Activated CD8-positive, alpha-beta memory T cell treated with anti-CD3 and anti-CD28 coated beads, Interleukin-2, amount 10 ng/mL, durations not matched to agents 7 days and 5 days (primary cell): ENCODE measurements at regions of chr3 and their contacts with region 1.

Region 1: GRCh38 chr3:113287803-113288648 is 76.7 kb downstream of the BOC start:
- DNase-seq: peak; percentile 56
- ATAC-seq: no peak
- H3K4me3 Mint-ChIP-seq: no peak overlapping the region
- H3K27ac Mint-ChIP-seq: no peak overlapping the region
- H3K4me1 Mint-ChIP-seq: no peaks in the 10 kb centered on the region
- H3K27me3 Mint-ChIP-seq: no peaks in the 10 kb centered on the region

Region 2: GRCh38 chr3:112699436-112699978 is 588.5 kb before region 1 on chr3:
- CTCF ChIA-PET with region 1: no interaction called
- DNase-seq: no peak
- ATAC-seq: no peak
- H3K4me3 Mint-ChIP-seq: no peak overlapping the region
- H3K27ac Mint-ChIP-seq: no peak overlapping the region
- H3K4me1 Mint-ChIP-seq: peaks cover 12% of the 10 kb centered on the region
- H3K27me3 Mint-ChIP-seq: peaks cover 38% of the 10 kb centered on the region

Region 3: DNA sequence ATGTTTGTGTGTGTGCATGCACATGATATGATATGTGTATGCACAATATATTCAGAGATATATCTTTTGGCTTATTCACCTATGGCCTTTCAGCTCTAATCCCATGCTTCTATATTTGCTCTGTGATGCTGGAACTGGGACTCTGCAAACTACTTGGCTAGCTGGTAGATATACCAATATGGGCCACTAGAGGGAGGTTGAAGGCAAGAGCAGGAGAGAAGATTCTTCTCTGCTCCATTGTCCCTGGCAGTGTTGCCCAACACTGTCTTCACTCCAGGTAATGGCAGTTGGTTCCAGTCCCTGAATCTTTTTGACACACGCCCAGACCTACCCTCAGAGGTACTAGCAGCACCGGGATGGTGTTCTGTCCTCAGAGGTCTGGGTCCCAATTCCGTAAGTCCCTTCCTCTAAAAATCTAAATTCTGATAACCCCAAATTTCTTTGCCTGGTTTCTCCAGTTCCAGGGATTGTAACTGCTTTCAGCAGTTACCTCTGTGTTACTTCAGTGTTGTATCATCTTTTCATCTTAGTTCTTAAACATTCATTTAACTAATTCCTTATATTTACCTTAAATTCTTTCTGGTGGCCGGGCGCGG is 252.5 kb before region 1 on chr3:
- CTCF ChIA-PET with region 1: interaction called, 11 read pairs
- DNase-seq: peak; percentile 45
- ATAC-seq: peak; percentile 84
- H3K4me3 Mint-ChIP-seq: no peak overlapping the region
- H3K27ac Mint-ChIP-seq: no peak overlapping the region
- H3K4me1 Mint-ChIP-seq: no peaks in the 10 kb centered on the region
- H3K27me3 Mint-ChIP-seq: no peaks in the 10 kb centered on the region

Region 4: DNA sequence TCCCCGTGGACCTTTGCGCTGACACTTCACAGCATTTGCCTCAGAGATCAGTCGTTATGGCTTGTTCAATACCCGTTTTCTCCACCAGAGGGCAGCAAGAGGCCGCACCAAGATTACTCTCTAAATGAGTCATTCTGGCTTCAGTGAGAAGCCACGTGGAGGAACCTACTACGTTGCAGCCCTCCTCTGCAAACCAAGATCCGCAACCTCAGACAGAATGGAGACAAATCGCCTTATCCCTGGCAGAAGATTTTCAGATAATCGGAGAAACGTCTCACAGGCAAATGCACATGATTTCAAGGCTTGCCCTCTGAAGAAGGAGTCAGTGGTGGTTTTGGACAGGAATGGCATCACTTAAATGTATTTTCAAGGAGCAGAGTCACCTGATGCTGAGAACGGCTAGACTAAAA is 236.7 kb before region 1 on chr3:
- CTCF ChIA-PET with region 1: interaction called, 22 read pairs
- DNase-seq: peak; percentile 91
- ATAC-seq: peak; percentile 99
- H3K4me3 Mint-ChIP-seq: no peak overlapping the region
- H3K27ac Mint-ChIP-seq: no peak overlapping the region
- H3K4me1 Mint-ChIP-seq: peaks cover 3% of the 10 kb centered on the region
- H3K27me3 Mint-ChIP-seq: no peaks in the 10 kb centered on the region

Region 5: DNA sequence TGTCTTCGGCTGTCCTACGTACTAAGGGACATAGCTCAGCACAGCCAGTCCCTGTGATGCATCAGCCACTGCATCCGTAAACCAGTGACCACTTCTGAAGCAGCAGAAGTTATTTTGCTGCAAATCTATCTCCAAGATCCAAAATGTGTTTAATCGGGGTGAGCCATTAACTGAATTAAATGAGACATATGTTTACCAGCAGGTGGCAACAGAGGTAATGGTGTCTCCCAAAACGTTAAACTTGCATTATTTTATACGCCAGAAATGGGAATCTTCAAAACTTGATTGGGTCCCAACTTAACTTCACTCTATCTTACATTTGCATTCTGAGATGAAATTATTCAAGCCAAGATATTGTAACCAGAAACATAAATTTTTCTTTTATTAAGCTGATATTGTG is 152.0 kb before region 1 on chr3:
- CTCF ChIA-PET with region 1: interaction called, 19 read pairs
- DNase-seq: no peak
- ATAC-seq: no peak
- H3K4me3 Mint-ChIP-seq: no peak overlapping the region
- H3K27ac Mint-ChIP-seq: no peak overlapping the region
- H3K4me1 Mint-ChIP-seq: peaks cover 3% of the 10 kb centered on the region
- H3K27me3 Mint-ChIP-seq: no peaks in the 10 kb centered on the region

Region 6: GRCh38 chr3:113275929-113276750 is 11.9 kb before region 1 on chr3:
- CTCF ChIA-PET with region 1: interaction called, 18 read pairs
- DNase-seq: no peak
- ATAC-seq: no peak
- H3K4me3 Mint-ChIP-seq: peak overlapping the region; percentile 32
- H3K27ac Mint-ChIP-seq: no peak overlapping the region
- H3K4me1 Mint-ChIP-seq: peaks cover 8% of the 10 kb centered on the region
- H3K27me3 Mint-ChIP-seq: peaks cover 2% of the 10 kb centered on the region